ENCODE measurements at regions of chr10 and their contacts with region 1.

Region 1: GRCh38 chr10:95601116-95601719 is 40.0 kb upstream of the SORBS1 start:
- DNase-seq: peak; percentile 84 to 88
- H3K4me3 ChIP-seq: no peak overlapping the region
- H3K27ac ChIP-seq: no peak overlapping the region
- H3K4me1 ChIP-seq: peaks cover 0 to 3% (median 0%) of the 10 kb centered on the region in 4 experiments; a peak in 1 of 7 replicates
- H3K27me3 ChIP-seq: no peaks in the 10 kb centered on the region
- CTCF ChIP-seq: peak; percentile 78 to 99 (median 98)
- EP300 ChIP-seq: no peak
- POLR2A ChIP-seq: no peak
- RAD21 ChIP-seq: peak; percentile 100

Region 2: GRCh38 chr10:95391581-95392216 is 209.5 kb before region 1 on chr10:
- CTCF ChIA-PET with region 1: interaction called, 27 read pairs
- POLR2A ChIA-PET with region 1: no interaction called
- DNase-seq: no peak
- H3K4me3 ChIP-seq: no peak overlapping the region
- H3K27ac ChIP-seq: no peak overlapping the region
- H3K4me1 ChIP-seq: peaks cover 0 to 3% (median 0%) of the 10 kb centered on the region in 4 experiments; a peak in 3 of 7 replicates
- H3K27me3 ChIP-seq: no peaks in the 10 kb centered on the region
- CTCF ChIP-seq: peak in 2 of 3 experiments; percentile 23 to 24; a peak in 2 of 4 replicates
- EP300 ChIP-seq: no peak
- POLR2A ChIP-seq: no peak
- RAD21 ChIP-seq: peak in 1 of 2 experiments; percentile 17; a peak in 1 of 4 replicates

Region 3: DNA sequence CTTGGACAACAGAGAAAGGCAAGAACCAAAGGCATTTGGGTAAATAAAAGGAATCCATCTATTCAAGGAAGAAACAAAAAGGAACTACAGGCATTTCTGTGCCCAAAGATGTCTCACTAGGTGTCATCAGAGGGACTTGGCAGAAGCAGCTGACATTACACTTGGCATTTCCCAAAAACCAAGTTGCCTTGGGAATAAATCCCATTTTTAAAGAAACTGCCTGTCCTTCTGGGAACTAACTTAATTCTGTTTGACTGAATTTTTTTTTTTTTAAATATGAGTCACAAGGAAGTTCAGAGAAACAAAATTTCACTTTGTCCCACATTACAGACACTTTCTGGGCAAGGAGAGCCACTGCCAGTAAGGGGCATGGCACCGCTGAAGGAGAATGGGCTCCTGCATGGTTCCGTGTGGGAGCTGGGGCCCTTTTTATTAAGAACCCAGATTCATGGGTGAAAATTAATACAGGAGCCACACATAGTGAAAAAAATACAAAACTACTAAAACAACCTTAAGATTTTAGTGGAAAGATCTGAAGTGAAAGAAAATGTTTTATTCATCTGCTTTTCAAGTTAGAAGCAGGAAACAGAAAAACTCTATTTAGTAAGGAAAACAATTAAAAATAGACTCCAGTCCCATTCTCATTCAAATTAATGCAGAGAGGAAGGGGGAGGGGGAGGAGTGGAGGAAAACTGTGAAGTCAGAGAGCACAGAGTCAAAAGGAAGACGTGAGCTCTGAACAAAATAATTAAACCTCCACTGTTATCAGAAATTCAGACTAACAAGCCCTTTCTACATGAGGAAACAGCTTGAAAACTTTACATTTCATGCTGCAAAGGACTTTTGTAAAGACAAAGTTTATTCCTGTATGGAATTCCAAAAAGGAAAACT is 192.0 kb before region 1 on chr10:
- CTCF ChIA-PET with region 1: interaction called, 12 read pairs
- POLR2A ChIA-PET with region 1: no interaction called
- DNase-seq: no peak
- H3K4me3 ChIP-seq: peak overlapping the region in 3 of 4 experiments; percentile 2 to 43 (median 15); a peak in 4 of 8 replicates
- H3K27ac ChIP-seq: peak overlapping the region; percentile 47; the same call in 1 of the 2 replicates
- H3K4me1 ChIP-seq: peaks cover 4 to 12% (median 8%) of the 10 kb centered on the region in 4 experiments
- H3K27me3 ChIP-seq: no peaks in the 10 kb centered on the region; a peak in 1 of 7 replicates
- CTCF ChIP-seq: no peak
- EP300 ChIP-seq: no peak
- POLR2A ChIP-seq: no peak
- RAD21 ChIP-seq: no peak

Region 4: DNA sequence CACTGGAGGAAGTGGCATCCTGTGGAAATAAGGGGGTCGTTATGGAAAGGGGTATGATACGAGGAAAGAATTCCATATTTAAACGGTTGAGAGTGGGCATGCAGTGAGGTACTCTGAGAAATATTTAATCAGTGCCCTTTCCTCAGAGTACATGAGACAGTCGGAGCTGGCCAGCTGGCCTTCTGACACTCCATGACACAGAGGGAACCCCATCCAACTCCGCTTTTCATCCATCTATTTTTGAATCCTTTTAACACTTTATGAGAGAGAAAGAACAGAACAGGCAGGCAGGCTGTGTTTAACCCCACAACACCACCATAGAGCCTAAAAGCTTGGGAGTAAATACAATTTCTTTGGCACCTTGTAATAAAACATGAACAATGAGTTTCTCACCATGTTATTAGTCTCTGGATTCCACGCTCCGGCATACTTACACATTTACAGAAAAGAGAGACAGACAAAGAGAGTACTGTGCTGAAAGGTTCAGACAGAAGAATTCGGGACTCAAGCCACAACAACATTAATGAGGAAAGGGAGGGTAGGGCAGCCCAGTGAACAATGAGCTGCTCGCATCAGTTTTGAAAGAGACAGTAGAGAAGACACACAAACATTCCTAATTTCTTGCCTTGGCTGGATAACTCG is 186.3 kb before region 1 on chr10:
- CTCF ChIA-PET with region 1: interaction called, 12 read pairs
- POLR2A ChIA-PET with region 1: no interaction called
- DNase-seq: no peak
- H3K4me3 ChIP-seq: no peak overlapping the region
- H3K27ac ChIP-seq: no peak overlapping the region
- H3K4me1 ChIP-seq: peaks cover 4 to 8% (median 6%) of the 10 kb centered on the region in 4 experiments; a peak in 6 of 7 replicates
- H3K27me3 ChIP-seq: no peaks in the 10 kb centered on the region; a peak in 1 of 7 replicates
- CTCF ChIP-seq: no peak
- EP300 ChIP-seq: no peak
- POLR2A ChIP-seq: no peak
- RAD21 ChIP-seq: no peak

Region 5: GRCh38 chr10:95440756-95441546 is 160.3 kb before region 1 on chr10:
- CTCF ChIA-PET with region 1: interaction called, 304 read pairs
- POLR2A ChIA-PET with region 1: no interaction called
- DNase-seq: no peak
- H3K4me3 ChIP-seq: no peak overlapping the region
- H3K27ac ChIP-seq: no peak overlapping the region; the same call in 1 of the 2 replicates
- H3K4me1 ChIP-seq: peaks cover 0 to 5% (median 0%) of the 10 kb centered on the region in 4 experiments; a peak in 1 of 7 replicates
- H3K27me3 ChIP-seq: no peaks in the 10 kb centered on the region
- CTCF ChIP-seq: no peak
- EP300 ChIP-seq: no peak
- POLR2A ChIP-seq: no peak
- RAD21 ChIP-seq: no peak

Region 6: GRCh38 chr10:95480102-95480900 is 120.9 kb before region 1 on chr10:
- CTCF ChIA-PET with region 1: interaction called, 10 read pairs
- POLR2A ChIA-PET with region 1: interaction called, 3 read pairs
- DNase-seq: no peak
- H3K4me3 ChIP-seq: no peak overlapping the region
- H3K27ac ChIP-seq: 0 out of 2 replicates have a peak overlapping the region, but pooled peaks have one; percentile 21
- H3K4me1 ChIP-seq: peaks cover 13 to 31% (median 20%) of the 10 kb centered on the region in 4 experiments
- H3K27me3 ChIP-seq: no peaks in the 10 kb centered on the region
- CTCF ChIP-seq: peak in 1 of 3 experiments; percentile 34; a peak in 1 of 4 replicates
- EP300 ChIP-seq: no peak
- POLR2A ChIP-seq: no peak
- RAD21 ChIP-seq: no peak; a peak in 1 of 4 replicates

Region 7: DNA sequence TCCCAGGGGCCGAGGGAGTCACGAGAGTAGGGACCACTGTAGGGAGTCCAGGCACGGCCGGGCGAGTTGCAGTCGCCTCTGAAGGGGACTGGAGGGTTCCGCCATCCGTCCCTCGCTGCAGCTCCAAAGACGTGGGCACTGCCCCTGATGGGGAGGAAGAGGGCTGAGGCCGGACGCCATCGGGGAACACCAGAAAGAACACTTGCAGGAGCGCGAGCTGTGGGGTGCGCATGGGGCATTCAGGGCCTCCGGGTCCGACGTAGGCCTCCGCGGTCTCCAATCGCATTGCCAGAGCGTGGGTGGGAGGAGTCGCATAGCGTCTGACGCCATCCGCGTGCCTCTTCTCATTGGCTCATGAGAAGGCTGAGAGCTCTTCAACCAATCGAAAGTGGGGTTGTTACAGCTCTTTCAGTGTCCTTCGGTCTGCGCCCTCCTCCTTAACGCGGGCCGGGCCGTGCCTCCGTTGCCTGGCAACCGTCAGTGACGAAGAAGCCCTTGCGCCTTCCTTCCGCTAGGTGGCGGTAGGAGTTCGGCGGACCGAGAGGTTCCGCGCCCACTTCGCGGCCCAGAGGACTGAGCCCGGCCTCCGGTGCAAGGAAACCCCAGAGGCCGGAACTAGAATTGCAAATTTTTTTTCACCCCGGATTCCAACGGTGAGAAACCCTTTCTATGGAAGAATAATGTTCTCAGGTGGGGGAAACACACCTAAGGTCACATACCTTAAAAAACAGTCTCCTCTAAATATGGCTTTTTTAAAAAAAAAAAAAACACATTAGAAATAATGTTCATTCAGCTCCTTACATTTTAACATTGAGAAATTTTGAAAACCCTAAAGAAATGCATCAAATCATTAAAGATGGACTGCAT is 92.7 kb after region 1 on chr10 and contains the start of gene TCTN3:
- CTCF ChIA-PET with region 1: no interaction called
- POLR2A ChIA-PET with region 1: no interaction called
- DNase-seq: peak; percentile 95 to 97
- H3K4me3 ChIP-seq: peak within 1 kb of the TSS; percentile 65 to 98 (median 82)
- H3K27ac ChIP-seq: peak within 1 kb of the TSS; percentile 82
- H3K4me1 ChIP-seq: peaks cover 0 to 3% (median 1%) of the 10 kb centered on the region in 4 experiments; a peak in 2 of 7 replicates
- H3K27me3 ChIP-seq: no peaks in the 10 kb centered on the region
- CTCF ChIP-seq: peak; percentile 99 to 100 (median 99)
- EP300 ChIP-seq: peak in 1 of 2 experiments; percentile 79; a peak in 1 of 3 replicates
- POLR2A ChIP-seq: peak; percentile 64 to 90
- RAD21 ChIP-seq: peak; percentile 97 to 99
- total RNA-seq, gene TCTN3: 31.9 and 34.7 TPM in 2 replicates